Psoas muscle (tissue), 8 donors: ENCODE measurements at regions of chr20 and their contacts with region 1.

Region 1: DNA sequence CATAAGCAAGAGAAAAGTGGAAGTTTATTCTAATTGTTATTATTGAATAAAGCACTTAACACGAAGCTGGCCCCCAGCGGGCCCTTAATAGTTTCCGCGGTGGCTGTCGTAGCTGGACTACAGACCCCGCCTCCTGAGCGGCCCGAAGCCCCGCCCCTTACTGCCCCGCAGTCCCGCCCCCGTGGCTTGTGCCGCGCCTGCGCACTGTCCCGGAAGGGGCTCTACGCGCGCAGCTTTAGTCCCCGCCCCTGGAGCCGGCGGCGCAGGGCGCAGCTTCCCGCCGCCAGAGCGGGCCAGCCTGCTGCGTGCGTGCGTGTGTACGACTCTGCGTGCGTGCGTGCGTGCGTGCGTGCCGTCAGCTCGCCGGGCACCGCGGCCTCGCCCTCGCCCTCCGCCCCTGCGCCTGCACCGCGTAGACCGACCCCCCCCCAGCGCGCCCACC is at the start of gene VAPB:
- DNase-seq: peak; percentile 95 to 98
- ATAC-seq: peak; percentile 99 to 100 (median 99)
- H3K4me3 ChIP-seq: peak within 1 kb of the TSS; percentile 90
- H3K27ac ChIP-seq: peak within 1 kb of the TSS; percentile 97
- H3K4me1 ChIP-seq: peaks cover 37% of the 10 kb centered on the region
- H3K27me3 ChIP-seq: no peaks in the 10 kb centered on the region
- CTCF ChIP-seq: no peak
- total RNA-seq, gene VAPB: 64.0 to 84.5 (median 77.5) TPM

Region 2: DNA sequence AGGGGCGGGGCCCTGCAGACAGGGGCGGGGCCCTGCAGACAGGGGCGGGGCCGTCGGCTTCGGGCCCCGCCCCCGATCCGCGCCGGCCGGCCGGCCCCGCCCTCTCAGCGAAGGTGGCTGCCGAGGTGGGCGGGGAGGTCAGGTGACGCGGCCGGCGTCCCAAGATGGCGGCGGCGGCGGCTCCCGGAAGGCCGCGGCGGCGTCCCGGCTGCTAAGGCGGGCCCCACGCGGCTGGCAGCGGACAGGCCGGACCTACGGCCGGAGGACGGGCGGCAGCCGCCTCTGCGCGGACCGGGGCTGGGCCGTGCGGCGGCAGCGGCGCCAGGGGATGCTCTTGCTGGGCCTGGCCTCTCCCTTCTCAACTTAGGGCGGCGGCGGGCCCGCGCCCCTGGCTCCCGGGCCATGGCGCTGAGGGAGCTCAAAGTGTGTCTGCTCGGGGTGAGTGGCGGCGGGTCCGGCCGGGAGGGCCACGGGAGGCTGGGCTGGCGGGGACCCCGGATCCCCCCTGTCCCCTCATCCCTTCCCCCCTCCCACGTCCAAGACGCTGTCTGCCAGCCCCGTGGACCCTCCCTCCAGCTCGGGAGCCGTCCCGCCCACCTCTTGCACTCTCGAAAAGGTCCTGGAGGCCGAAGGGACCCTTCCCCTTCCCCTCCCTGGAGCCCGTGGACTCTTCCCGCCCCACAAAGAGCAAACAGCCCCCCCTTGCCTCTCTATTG is 79.2 kb before region 1 on chr20 and contains the start of gene RAB22A:
- intact Hi-C with region 1: loop called in 1 of 2 experiments (anchors 10 kb)
- DNase-seq: peak; percentile 84 to 92
- ATAC-seq: peak; percentile 93 to 99 (median 96)
- H3K4me3 ChIP-seq: peak within 1 kb of the TSS; percentile 100
- H3K27ac ChIP-seq: peak within 1 kb of the TSS; percentile 93
- H3K4me1 ChIP-seq: peaks cover 16% of the 10 kb centered on the region
- H3K27me3 ChIP-seq: no peaks in the 10 kb centered on the region
- CTCF ChIP-seq: no peak
- total RNA-seq, gene RAB22A: 7.1 to 8.5 (median 8.1) TPM

Region 3: DNA sequence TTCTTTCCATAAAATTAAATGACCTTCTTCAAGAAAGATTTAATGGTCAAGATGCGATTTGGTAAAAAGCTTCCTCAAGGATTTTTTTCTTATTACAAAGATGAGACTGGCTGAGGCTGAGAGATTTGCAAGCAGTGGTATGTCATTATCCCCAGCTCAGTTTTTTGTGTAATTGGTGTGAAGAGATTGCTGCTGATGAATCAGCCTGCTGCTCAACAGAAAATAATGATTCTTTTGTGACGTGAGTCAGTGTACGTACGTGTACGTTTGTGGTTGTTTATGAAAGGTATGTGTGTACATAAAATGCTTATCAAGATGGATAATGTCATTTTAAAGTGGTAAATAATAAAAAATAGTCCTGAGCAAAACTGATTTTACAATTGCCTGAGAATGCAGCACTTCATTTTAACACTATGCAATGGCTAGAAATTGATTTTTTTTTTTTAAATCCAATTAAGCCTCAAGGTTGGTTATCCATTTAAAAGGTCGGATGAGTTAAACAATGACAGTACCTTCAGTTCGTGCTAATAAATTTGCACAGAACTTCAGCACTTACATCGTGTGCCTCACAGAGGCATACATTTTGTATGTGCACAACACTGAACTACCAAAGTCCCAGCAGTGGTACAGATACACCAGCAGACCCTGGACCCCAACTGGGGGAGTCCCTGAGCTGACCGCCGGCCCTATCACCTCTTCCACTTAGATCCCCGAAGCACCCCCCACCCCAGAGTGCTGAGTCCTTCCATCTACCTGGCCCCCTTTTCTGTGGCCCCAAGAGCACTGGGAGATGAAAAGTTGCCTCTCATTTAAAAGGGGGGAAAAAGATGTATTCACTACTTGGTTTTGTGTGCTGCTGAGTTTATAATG is 294.0 kb after region 1 on chr20:
- intact Hi-C with region 1: no loop called
- DNase-seq: no peak
- ATAC-seq: no peak
- H3K4me3 ChIP-seq: no peak overlapping the region
- H3K27ac ChIP-seq: no peak overlapping the region
- H3K4me1 ChIP-seq: no peaks in the 10 kb centered on the region
- H3K27me3 ChIP-seq: no peaks in the 10 kb centered on the region
- CTCF ChIP-seq: no peak